Activated CD4-positive, alpha-beta T cell treated with anti-CD3 and anti-CD28 coated beads, Interleukin-2, amount 10 ng/mL, durations not matched to agents 24 days and 14 days (primary cell): ENCODE measurements at regions of chr18 and their contacts with region 1.

Region 1: DNA sequence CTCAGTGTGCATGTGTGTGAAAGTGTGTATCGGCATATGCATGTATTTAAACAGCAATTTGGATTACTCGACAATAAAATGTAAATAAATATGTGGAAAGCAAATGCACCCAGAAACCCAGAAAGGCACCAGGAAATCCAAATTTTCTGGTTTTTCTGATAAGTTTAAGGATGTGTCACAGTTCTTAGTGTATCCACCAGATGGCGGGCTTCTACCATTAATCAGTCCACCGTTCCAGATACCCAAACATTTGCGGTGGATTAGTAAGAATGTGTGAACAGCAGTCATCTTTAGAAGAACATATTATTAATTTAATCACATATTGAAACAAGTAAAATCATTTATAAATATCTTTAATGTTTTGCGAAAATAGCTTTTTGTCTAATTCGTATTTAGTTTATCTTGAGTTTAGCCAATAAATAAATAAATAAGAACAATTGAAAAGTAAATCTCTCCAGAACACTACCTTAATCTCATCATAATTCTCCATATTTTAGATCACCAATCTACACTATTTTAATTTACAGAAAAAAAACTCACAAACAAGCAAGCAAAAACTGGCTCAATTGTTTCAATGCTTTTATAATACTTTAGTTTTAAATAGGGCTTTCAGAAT is 298.9 kb downstream of the DSEL start:
- DNase-seq: peak; percentile 84
- H3K4me3 Mint-ChIP-seq: no peak overlapping the region
- H3K27ac Mint-ChIP-seq: no peak overlapping the region
- H3K4me1 Mint-ChIP-seq: no peaks in the 10 kb centered on the region
- H3K27me3 Mint-ChIP-seq: no peaks in the 10 kb centered on the region

Region 2: GRCh38 chr18:66900837-66901236 is 316.8 kb before region 1 on chr18:
- intact Hi-C with region 1: no loop called
- DNase-seq: no peak
- H3K4me3 Mint-ChIP-seq: no peak overlapping the region
- H3K27ac Mint-ChIP-seq: no peak overlapping the region
- H3K4me1 Mint-ChIP-seq: no peaks in the 10 kb centered on the region
- H3K27me3 Mint-ChIP-seq: no peaks in the 10 kb centered on the region

Region 3: DNA sequence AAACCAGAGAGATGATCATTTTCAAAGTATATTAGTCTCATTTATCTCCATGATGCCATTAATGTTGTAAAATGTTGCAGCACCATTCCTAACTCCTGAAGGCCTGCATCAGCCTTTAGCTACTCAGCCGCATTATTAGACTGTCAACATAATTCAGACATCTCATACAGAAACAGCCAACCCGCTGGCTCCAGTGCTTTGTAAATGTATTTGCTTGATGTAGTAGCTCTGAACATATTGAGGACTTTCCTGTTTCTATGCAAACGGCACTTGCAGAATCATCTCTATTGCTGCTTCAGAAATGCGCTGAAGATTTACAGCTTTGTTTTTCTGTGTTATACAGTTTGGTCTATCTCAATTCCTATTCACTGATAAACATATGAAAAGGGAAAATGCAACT is 73.3 kb before region 1 on chr18:
- intact Hi-C with region 1: no loop called
- DNase-seq: no peak
- H3K4me3 Mint-ChIP-seq: no peak overlapping the region
- H3K27ac Mint-ChIP-seq: no peak overlapping the region
- H3K4me1 Mint-ChIP-seq: no peaks in the 10 kb centered on the region
- H3K27me3 Mint-ChIP-seq: no peaks in the 10 kb centered on the region

Region 4: GRCh38 chr18:67417864-67418523 is 200.3 kb after region 1 on chr18:
- intact Hi-C with region 1: loop called (anchors 5 kb)
- DNase-seq: peak; percentile 78
- H3K4me3 Mint-ChIP-seq: peak overlapping the region; percentile 24
- H3K27ac Mint-ChIP-seq: no peak overlapping the region
- H3K4me1 Mint-ChIP-seq: peaks cover 7% of the 10 kb centered on the region
- H3K27me3 Mint-ChIP-seq: peaks cover 2% of the 10 kb centered on the region

Region 5: DNA sequence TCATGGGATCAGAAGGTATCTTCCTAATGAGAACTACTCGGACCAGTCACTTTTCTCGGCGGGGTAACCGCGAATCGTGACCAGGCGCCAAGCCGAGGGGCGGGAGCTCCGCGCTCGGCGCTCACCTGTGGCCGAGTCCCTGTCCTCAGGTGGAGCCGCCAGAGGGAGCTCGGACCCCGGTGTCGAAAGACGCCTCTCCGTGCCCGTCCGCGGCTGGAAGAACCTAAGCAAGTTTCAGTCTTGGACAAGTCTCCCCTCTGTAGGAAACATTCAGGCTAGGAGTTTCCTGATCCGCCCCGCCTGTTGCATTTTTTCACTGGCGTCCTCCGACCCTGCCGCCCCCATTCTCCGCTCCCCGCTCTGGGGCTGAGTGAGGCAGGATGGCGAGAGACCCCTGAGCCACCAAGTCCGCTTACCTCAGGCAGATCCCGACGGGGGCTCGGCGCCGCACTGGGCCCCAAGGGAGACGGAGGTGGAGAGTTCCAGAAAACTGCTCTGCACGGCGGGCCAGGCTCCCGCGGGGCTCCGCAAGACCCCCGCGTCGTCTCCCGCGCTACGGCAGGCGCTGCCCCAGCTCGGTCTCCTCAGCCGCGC is 298.4 kb after region 1 on chr18:
- intact Hi-C with region 1: loop called (anchors 5 kb)
- DNase-seq: peak; percentile 81
- H3K4me3 Mint-ChIP-seq: peak overlapping the region; percentile 82
- H3K27ac Mint-ChIP-seq: no peak overlapping the region
- H3K4me1 Mint-ChIP-seq: peaks cover 17% of the 10 kb centered on the region
- H3K27me3 Mint-ChIP-seq: peaks cover 55% of the 10 kb centered on the region

Region 6: DNA sequence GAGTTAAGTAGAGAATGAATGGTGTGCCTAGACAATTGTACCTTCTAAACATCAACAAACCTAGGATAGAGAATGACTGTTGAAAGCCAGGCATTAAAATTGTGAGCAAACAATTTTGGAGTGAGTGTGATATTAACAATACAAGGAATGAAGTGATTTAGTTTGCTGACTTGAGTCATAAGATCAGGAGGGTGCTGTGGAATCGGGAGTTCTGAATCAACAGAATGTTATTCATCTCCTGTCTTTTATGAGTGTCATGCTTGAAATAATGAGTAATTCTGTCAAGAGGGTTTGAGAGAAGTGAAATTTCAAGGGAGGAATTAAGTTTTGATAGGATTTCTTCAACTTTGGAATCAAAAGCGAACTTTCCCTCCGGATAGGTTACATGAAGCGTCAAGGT is 513.2 kb after region 1 on chr18:
- intact Hi-C with region 1: no loop called
- DNase-seq: no peak
- H3K4me3 Mint-ChIP-seq: no peak overlapping the region
- H3K27ac Mint-ChIP-seq: no peak overlapping the region
- H3K4me1 Mint-ChIP-seq: no peaks in the 10 kb centered on the region
- H3K27me3 Mint-ChIP-seq: no peaks in the 10 kb centered on the region

Region 7: GRCh38 chr18:67875944-67876343 is 658.3 kb after region 1 on chr18:
- intact Hi-C with region 1: no loop called
- DNase-seq: no peak
- H3K4me3 Mint-ChIP-seq: no peak overlapping the region
- H3K27ac Mint-ChIP-seq: no peak overlapping the region
- H3K4me1 Mint-ChIP-seq: no peaks in the 10 kb centered on the region
- H3K27me3 Mint-ChIP-seq: no peaks in the 10 kb centered on the region

Region 8: GRCh38 chr18:68660354-68661183 is 1442.9 kb after region 1 on chr18:
- intact Hi-C with region 1: loop called (anchors 1 kb)
- DNase-seq: peak; percentile 52
- H3K4me3 Mint-ChIP-seq: no peak overlapping the region
- H3K27ac Mint-ChIP-seq: no peak overlapping the region
- H3K4me1 Mint-ChIP-seq: no peaks in the 10 kb centered on the region
- H3K27me3 Mint-ChIP-seq: peaks cover 16% of the 10 kb centered on the region

Region 9: DNA sequence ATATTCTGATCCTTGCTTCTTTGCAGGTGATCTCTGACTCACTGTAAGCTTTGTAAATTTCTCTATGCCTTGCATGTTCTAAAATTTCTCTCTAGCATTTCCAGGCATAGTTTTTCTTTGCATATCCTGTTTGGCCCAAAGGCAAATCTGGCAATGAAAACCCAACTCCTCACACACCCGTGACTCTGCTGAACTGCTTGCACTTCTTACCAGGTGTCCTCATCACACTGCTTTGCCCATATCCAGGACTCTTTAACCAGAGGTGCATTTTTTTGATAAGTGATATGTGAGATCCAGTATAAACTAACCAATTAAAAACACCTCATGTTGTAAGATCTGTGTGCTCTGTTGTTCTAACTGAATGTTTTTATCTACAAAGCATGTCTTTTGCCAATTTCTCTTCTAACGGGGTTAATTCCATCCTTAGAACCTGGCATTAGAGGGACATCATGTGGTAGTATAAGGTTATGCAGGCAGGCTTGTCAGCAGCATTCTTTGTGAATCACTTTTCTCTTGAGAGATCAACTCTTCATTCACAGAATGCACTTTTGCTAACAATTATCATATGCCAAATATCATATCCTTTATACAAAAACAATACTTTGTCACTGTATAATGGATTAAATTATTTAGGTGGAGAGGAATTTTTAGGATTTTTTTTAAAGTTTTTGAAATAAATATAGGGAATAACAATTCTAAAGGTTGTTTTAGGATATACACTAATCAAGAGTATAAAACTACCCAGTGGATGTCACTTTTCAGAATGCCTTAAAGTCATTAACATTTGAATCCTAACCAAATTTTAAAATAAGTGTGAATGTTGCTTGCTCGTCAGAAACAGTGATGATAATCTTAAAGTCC is 1518.1 kb after region 1 on chr18:
- intact Hi-C with region 1: loop called (anchors 5 kb)
- DNase-seq: peak; percentile 75
- H3K4me3 Mint-ChIP-seq: no peak overlapping the region
- H3K27ac Mint-ChIP-seq: no peak overlapping the region
- H3K4me1 Mint-ChIP-seq: no peaks in the 10 kb centered on the region
- H3K27me3 Mint-ChIP-seq: peaks cover 3% of the 10 kb centered on the region